Mammary epithelial cell (primary cell): ENCODE measurements at regions of chr19 and their contacts with region 1.

Region 1: DNA sequence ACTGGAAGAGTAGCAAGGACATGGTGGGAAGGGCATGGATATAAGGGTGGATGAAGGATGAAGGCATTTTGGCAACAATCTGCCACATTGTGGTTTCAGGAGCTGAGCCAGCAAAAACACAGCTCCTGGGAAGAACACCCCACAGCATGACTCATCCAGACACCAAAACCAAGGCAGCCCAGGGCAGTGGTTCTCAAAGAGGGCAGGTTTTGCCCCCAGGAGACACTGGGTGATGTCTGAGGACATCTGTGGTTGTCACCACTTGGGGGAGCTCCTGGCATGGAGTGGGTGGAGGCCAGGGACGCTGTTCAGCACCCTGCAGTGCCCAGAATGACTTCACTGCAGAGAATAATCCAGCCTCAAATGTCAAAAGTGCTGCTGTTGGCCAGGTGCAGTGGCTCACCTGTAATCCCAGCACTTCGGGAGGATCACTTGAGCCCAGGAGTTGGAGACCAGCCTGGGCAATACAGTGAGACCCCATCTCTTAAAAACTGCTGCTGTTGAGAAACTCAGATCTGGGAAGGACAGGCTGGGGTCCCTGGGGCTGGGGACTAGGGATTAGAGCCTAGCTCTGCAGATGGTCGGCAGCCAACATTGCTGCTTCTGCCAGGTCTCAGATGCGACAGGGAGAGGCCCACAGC is 16.1 kb downstream of the ZFR2 start:
- DNase-seq: peak; percentile 95
- H3K4me3 ChIP-seq: no peak overlapping the region
- H3K27ac ChIP-seq: no peak overlapping the region
- H3K4me1 ChIP-seq: no peaks in the 10 kb centered on the region
- H3K27me3 ChIP-seq: peaks cover 22% of the 10 kb centered on the region
- CTCF ChIP-seq: peak; percentile 25 to 68

Region 2: GRCh38 chr19:3716147-3716668 is 136.5 kb before region 1 on chr19:
- CTCF ChIA-PET with region 1: no interaction called
- dilution Hi-C with region 1: no loop called
- in situ Hi-C with region 1: no loop called
- intact Hi-C with region 1: loop called (anchors 5 kb)
- DNase-seq: no peak
- H3K4me3 ChIP-seq: no peak overlapping the region
- H3K27ac ChIP-seq: no peak overlapping the region
- H3K4me1 ChIP-seq: peaks cover 3% of the 10 kb centered on the region
- H3K27me3 ChIP-seq: no peaks in the 10 kb centered on the region
- CTCF ChIP-seq: no peak

Region 3: DNA sequence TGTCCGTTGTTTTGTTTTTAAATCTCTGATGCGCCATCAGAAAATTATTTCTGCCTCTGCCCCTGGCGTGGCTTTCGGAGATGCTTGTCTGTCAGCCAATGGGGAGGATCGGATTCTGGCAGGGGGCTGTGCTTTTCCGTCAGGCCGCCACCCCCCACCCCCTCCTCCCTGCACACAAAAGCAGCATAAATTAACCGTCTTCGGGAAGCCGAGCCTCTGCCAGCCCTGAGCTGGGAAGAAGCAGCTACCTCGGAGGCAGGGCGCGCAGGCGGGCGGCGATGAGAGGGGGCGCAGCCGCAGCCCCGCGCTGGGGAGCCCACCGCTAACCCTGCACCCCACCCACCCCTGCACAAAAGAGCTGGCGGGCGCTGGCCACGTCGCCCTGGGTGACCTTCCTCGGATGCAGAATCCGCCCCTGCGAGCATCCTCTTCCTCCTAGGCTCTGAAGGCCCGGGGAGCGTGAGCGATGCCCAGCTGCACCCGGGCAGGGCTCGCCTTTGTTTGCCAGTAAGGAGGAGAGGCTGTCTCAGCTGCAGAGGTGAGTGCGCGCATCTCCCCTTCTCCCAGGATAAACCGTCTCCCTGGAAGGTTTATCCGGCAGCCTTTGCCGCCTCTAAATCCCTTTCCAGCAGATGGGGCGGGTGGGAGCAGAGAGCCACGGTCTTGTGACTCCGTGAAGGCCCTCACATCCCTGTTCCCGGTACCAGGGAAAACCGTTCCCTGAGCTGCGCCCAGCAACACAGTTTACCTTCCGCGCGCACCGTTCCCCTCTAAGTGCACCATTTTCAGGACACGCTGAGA is 27.9 kb after region 1 on chr19 and contains the start of gene ATCAY:
- CTCF ChIA-PET with region 1: no interaction called
- dilution Hi-C with region 1: no loop called
- in situ Hi-C with region 1: no loop called
- intact Hi-C with region 1: no loop called
- DNase-seq: no peak
- H3K4me3 ChIP-seq: no peak within 1 kb of the TSS
- H3K27ac ChIP-seq: no peak within 1 kb of the TSS
- H3K4me1 ChIP-seq: no peaks in the 10 kb centered on the region
- H3K27me3 ChIP-seq: peaks cover 23% of the 10 kb centered on the region
- CTCF ChIP-seq: no peak
- total RNA-seq, gene ATCAY: not detected

Region 4: GRCh38 chr19:3916033-3916432 is 63.3 kb after region 1 on chr19:
- CTCF ChIA-PET with region 1: no interaction called
- dilution Hi-C with region 1: no loop called
- in situ Hi-C with region 1: no loop called
- intact Hi-C with region 1: no loop called
- DNase-seq: no peak
- H3K4me3 ChIP-seq: no peak overlapping the region
- H3K27ac ChIP-seq: no peak overlapping the region
- H3K4me1 ChIP-seq: no peaks in the 10 kb centered on the region
- H3K27me3 ChIP-seq: no peaks in the 10 kb centered on the region
- CTCF ChIP-seq: no peak

Region 5: GRCh38 chr19:3970808-3971598 is 118.3 kb after region 1 on chr19 and contains the start of gene DAPK3:
- CTCF ChIA-PET with region 1: no interaction called
- dilution Hi-C with region 1: no loop called
- in situ Hi-C with region 1: no loop called
- intact Hi-C with region 1: loop called (anchors 1 kb)
- DNase-seq: peak; percentile 99
- H3K4me3 ChIP-seq: peak within 1 kb of the TSS; percentile 92 to 97 (median 96)
- H3K27ac ChIP-seq: peak within 1 kb of the TSS; percentile 88
- H3K4me1 ChIP-seq: peaks cover 24% of the 10 kb centered on the region
- H3K27me3 ChIP-seq: no peaks in the 10 kb centered on the region
- CTCF ChIP-seq: no peak
- total RNA-seq, gene DAPK3: 69.2 to 99.9 TPM

Region 6: DNA sequence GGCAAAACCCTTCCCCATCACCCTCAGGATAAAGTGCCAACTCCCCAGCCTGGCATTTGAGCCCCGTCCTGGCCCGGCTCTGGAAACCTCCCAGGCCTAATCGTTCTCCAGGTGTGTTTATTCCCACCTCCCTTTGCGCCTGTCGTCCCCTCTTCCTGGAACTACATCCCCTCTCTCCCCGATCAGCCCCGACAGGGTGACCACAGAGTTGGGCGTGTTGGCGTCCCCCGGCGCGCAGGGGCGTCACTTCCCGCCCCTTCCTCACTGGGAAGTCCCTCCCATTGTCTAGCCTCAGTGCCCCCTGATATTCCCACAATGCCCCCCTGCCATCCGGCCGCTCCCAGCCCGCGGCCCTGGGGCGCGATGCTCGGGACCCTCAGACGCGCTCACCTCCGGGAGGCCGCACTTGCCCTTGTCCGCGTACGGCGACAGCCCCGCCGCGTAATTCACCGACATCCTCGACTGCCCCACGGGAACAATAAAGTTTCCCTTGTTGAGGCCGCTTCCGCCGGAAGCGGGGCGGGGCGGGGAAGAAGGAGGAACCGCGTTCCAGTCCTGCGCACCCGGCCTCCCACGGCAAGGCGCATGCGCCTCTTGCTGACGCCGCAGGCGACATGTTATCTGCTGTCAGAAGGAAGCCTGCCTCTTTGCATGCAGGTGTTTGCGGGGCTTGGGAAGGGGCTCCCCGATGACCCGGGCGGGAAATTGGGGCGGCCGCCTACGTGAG is 329.5 kb after region 1 on chr19 and contains the starts of genes ANKRD24 and SIRT6:
- CTCF ChIA-PET with region 1: no interaction called
- dilution Hi-C with region 1: no loop called
- in situ Hi-C with region 1: no loop called
- intact Hi-C with region 1: loop called (anchors 5 kb)
- DNase-seq: peak; percentile 91
- H3K4me3 ChIP-seq: peak within 1 kb of the TSS; percentile 91 to 94 (median 93)
- H3K27ac ChIP-seq: peak within 1 kb of the TSS; percentile 45
- H3K4me1 ChIP-seq: peaks cover 13% of the 10 kb centered on the region
- H3K27me3 ChIP-seq: no peaks in the 10 kb centered on the region
- CTCF ChIP-seq: no peak
- total RNA-seq, gene ANKRD24: 0.67 to 0.73 TPM
- total RNA-seq, gene SIRT6: 8.7 to 28.8 TPM

Region 7: DNA sequence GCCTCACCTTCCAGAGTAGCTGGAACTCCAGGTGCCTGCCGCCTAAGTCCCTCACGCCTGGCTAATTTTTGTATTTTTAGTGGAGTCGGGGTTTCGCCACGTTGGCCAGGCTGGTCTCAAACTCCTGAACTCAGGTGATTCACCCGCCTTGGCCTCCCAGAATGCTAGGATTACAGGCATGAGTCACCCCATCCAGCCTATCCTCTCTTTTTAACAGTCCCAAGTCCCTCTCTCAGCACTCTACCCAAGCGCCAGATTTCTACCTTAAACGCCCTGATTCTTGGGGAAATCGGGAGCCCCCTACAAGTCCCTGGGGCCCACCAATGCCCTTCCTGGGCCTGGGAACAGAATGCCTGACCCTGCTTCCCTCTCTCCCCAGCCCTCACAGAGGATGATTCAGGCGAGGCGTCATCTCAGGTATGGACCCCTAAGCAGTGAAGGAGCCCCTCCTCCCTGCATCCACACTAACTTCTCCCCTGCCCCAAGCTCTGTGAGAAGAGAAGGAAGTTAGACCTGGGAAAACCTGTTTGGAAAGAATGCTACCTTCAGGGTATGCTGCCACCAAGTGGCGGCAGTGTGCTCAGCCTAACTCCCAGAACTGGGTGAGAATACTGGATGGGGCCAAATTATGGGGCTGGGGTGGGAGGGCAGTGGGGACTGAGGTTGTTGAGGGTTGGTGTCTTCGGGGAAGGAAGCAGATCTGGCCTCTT is 355.8 kb after region 1 on chr19:
- CTCF ChIA-PET with region 1: interaction called, 3 read pairs
- dilution Hi-C with region 1: loop called (anchors 5 kb)
- in situ Hi-C with region 1: no loop called
- intact Hi-C with region 1: loop called (anchors 1 kb)
- DNase-seq: peak; percentile 45
- H3K4me3 ChIP-seq: no peak overlapping the region
- H3K27ac ChIP-seq: no peak overlapping the region
- H3K4me1 ChIP-seq: no peaks in the 10 kb centered on the region
- H3K27me3 ChIP-seq: no peaks in the 10 kb centered on the region
- CTCF ChIP-seq: peak; percentile 20 to 37